Natural killer cell (primary cell): ENCODE measurements at regions of chr18 and their contacts with region 1.

Region 1: GRCh38 chr18:48663931-48664847 is 125.4 kb downstream of the CTIF start:
- DNase-seq: peak; percentile 35 to 60
- ATAC-seq: peak; percentile 50 to 74 (median 65)
- H3K4me3 ChIP-seq: no peak overlapping the region
- H3K4me3 Mint-ChIP-seq: no peak overlapping the region
- H3K27ac ChIP-seq: no peak overlapping the region
- H3K27ac Mint-ChIP-seq: no peak overlapping the region
- H3K4me1 ChIP-seq: peaks cover 5% of the 10 kb centered on the region
- H3K4me1 Mint-ChIP-seq: peaks cover 0 to 5% of the 10 kb centered on the region in 2 donors
- H3K27me3 ChIP-seq: no peaks in the 10 kb centered on the region
- H3K27me3 Mint-ChIP-seq: peaks cover 4 to 7% of the 10 kb centered on the region in 2 donors
- CTCF ChIP-seq: peak; percentile 75

Region 2: DNA sequence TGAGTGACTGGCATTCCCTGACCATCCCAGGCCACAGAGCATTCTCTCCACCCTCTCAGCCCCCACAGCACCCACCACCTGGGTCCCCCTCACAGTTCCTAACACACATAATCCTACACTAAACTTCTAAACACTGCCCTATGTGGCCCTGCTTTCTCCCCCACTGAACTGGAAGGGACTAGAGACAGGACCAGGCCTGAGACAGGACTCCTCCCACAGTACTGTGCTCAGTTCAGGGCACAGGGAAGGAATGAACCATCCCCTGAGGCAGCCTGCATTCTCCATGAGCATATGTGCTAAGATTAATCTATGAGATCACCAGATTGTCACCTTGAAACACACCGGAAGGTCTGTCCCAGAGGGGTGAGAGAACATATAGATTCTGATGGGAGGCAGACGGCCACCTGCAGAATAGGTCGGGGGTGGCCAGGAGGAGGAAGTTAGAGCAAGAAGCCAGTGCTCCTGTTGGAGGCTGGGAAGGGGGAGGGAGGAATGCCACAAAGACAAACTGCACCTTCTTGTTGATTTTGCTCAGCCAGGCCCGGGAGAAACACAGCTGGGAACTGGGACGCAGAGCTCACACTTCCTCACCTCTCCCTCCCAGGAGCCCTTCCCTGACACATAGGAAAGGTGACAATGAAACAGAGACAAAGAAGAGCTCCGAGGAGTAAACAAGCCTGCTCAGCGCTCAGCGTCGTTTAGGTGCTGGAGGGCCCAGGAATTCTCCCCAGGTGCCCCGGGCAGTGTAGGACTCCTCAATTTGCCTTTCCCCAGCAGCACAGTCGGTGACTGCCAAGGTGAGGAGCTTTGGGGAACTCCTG is 307.2 kb before region 1 on chr18:
- intact Hi-C with region 1: no loop called
- DNase-seq: no peak
- ATAC-seq: no peak
- H3K4me3 ChIP-seq: no peak overlapping the region
- H3K4me3 Mint-ChIP-seq: no peak overlapping the region
- H3K27ac ChIP-seq: no peak overlapping the region
- H3K27ac Mint-ChIP-seq: no peak overlapping the region
- H3K4me1 ChIP-seq: no peaks in the 10 kb centered on the region
- H3K4me1 Mint-ChIP-seq: no peaks in the 10 kb centered on the region
- H3K27me3 ChIP-seq: no peaks in the 10 kb centered on the region
- H3K27me3 Mint-ChIP-seq: peaks cover 12 to 19% of the 10 kb centered on the region in 2 donors
- CTCF ChIP-seq: no peak

Region 3: GRCh38 chr18:48455555-48456478 is 208.4 kb before region 1 on chr18:
- intact Hi-C with region 1: no loop called
- DNase-seq: peak in 1 of 2 donors; percentile 73
- ATAC-seq: peak in 1 of 3 donors; percentile 61
- H3K4me3 ChIP-seq: no peak overlapping the region
- H3K4me3 Mint-ChIP-seq: no peak overlapping the region
- H3K27ac ChIP-seq: no peak overlapping the region
- H3K27ac Mint-ChIP-seq: no peak overlapping the region
- H3K4me1 ChIP-seq: peaks cover 33% of the 10 kb centered on the region
- H3K4me1 Mint-ChIP-seq: peaks cover 21 to 27% of the 10 kb centered on the region in 2 donors
- H3K27me3 ChIP-seq: peaks cover 4% of the 10 kb centered on the region
- H3K27me3 Mint-ChIP-seq: peaks cover 3 to 14% of the 10 kb centered on the region in 2 donors
- CTCF ChIP-seq: no peak

Region 4: GRCh38 chr18:48475635-48476549 is 188.3 kb before region 1 on chr18:
- intact Hi-C with region 1: loop called (anchors 1 kb)
- DNase-seq: peak in 1 of 2 donors; percentile 55
- ATAC-seq: peak in 1 of 3 donors; percentile 59
- H3K4me3 ChIP-seq: no peak overlapping the region
- H3K4me3 Mint-ChIP-seq: no peak overlapping the region
- H3K27ac ChIP-seq: no peak overlapping the region
- H3K27ac Mint-ChIP-seq: no peak overlapping the region
- H3K4me1 ChIP-seq: no peaks in the 10 kb centered on the region
- H3K4me1 Mint-ChIP-seq: no peaks in the 10 kb centered on the region
- H3K27me3 ChIP-seq: no peaks in the 10 kb centered on the region
- H3K27me3 Mint-ChIP-seq: peaks cover 20 to 38% of the 10 kb centered on the region in 2 donors
- CTCF ChIP-seq: peak; percentile 14

Region 5: DNA sequence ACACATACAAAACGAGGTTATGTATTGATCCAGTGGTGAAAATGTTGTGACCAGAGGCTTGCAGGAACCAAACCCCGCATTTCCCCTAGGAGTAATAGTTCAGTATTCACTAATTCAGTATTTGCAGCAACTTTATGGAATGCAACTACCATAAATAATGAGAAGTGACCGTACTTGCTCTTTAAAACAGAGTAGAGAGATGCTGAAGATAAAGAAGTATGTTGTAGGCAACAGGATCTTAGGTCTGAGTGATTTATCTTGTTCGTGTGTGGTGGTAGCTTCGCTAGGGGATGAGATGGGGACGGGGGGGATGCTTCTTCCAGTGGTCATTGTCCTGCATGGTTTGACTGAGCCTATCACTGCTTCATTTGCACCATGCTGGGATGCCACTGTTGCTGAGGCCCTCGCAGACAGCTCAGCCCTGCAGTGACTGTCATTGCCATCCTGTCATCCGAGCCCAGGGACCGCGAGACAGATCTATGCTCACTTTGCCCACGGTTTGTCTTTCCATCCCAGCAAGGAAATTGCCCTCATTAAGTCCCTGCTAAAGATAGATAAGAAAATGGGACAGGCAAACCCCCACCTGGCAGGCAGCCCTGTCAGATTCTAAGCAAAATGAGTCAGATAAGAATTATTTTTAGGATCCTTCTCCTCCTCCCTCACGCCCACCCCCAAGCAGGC is 55.9 kb after region 1 on chr18:
- intact Hi-C with region 1: no loop called
- DNase-seq: no peak
- ATAC-seq: no peak
- H3K4me3 ChIP-seq: no peak overlapping the region
- H3K4me3 Mint-ChIP-seq: no peak overlapping the region
- H3K27ac ChIP-seq: no peak overlapping the region
- H3K27ac Mint-ChIP-seq: no peak overlapping the region
- H3K4me1 ChIP-seq: peaks cover 16% of the 10 kb centered on the region
- H3K4me1 Mint-ChIP-seq: peaks cover 7 to 13% of the 10 kb centered on the region in 2 donors
- H3K27me3 ChIP-seq: no peaks in the 10 kb centered on the region
- H3K27me3 Mint-ChIP-seq: no peaks in the 10 kb centered on the region
- CTCF ChIP-seq: no peak